Posterior cingulate gyrus (tissue), 11 donors: ENCODE measurements at regions of chr19 and their contacts with region 1.

Region 1: GRCh38 chr19:4638828-4639530 is at the start of gene TNFAIP8L1:
- DNase-seq: peak; percentile 89 to 99 (median 96)

Region 2: DNA sequence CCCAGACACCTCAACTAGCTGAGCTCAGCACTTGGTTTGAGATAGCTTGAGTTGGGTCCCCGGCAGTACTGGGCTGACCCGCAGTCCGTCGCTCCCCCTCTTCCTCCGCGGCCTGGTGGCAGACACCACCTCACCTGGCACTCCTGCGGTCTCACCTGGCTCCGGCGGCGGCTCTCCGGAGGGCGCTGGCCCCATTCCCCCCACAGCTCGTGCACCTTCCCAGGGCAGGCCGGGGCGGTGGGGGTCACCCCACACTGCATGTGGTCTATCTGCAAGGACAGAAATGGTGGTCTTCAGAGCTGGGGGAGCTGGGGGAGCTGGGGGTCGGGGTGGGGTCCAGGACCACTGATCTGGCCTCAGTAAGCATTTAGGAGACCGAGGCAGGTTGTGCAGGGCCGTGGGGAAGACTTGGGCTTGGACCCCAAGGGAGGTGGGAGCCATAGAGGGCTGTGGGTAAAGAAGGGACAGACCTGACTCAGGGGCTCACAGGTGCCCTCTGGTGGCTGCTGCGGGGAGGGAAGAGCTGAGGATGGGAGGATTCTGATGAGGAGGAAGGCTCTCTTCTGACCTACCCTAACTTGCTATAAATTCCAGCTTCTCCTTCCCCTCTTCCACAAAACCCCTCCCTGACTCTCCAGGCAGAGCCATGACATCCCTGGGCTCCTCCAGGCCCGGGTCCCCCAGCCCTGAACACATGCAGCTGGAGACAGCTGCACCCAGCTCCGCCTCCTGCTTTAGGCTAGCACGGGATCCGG is 114.0 kb before region 1 on chr19:
- intact Hi-C with region 1: no loop called
- DNase-seq: peak in 6 of 10 donors; percentile 37 to 91 (median 52)

Region 3: DNA sequence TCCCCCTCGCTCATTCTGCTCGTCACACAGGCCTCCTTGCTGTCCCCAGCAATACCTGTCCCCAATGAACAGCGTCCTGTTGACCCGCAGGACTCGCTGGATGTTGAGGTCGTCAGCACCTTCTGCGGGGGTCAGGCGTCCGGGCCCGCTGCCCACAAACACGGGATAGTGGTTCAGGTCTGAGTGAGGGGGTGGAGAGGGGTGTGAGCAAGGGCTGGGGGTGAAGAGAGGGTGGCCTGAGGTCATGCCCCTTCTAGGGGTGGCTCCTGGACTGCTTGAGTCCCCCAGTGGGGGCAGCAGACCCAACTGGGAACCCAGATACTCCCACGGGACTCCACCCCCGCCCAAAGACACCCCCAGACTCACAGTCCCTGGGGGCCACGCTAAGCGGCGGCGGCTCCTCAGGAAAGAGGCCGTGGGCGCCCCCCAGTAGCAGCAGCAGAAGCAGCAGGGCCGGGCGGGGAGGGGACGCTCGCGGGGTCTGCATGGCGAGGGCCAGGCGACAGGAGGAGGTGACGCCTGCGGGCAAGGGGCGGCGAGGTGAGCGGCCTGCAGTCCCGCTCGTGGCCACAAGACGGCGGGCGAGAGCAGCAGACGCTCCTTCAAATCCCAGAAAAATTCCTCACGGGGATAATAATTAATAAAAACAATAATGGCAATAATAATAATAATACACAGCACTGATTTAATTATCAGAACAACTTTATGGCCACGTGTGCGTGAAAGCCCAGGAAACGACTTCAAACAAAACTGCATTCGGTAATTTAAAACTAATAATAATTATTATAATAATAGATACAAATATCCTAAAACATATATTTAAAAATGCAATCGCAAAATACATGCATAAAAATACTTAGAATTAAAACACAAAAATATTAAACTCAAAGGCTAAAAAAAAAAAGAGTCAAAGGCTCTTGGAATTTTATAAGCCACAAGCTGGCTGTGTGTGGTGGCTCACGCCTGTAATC is 80.7 kb before region 1 on chr19:
- intact Hi-C with region 1: loop called (anchors 5 kb)
- DNase-seq: peak in 2 of 10 donors; percentile 37 to 70

Region 4: DNA sequence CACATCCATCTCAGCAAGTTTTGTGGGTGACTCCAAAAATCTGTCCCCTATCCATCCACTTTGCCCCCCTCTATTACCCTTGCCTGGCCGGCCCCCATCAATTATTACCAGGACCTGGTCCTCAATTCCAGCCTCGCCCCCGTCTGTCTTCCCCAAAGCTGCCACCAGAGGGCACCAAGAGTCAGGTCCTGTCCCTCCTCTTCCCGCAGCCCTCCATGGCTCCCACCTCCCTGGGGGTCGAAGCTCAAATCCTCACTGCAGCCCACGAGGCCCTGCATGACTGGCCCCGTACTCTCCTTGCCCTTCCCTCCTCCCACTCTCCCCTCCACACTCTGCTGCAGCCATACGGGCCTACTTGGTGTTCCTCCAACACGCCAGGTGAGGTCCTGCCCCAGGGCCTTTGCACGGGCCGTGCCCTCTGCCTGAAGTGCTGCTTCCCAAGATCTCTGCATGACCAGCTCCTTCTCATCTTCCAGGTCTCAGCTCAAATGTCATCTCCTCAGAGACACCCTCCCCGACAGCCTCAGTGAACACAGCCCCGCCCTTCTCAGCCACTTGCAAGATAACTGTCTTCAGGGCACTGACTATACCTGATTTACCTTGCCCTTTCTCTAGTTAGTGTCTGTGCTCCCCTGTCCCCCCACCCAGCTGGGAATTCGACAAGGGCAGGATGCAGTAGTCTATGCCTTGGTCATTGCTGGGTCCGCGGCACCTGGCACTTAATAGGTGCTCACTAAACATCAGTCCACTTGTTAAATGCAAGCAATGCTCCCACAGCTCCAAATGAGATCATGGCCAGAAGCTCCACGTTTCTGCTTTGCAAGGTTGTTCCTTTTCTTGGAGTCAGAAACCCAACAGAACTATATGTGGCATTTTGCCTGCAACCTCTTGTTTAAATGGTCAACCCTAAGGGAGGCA is 62.7 kb before region 1 on chr19:
- intact Hi-C with region 1: loop called (anchors 2 kb)
- DNase-seq: peak in 9 of 10 donors; percentile 29 to 91 (median 70)